Transverse colon (tissue), 4 donors: ENCODE measurements at regions of chr19 and their contacts with region 1.

Region 1: GRCh38 chr19:39335168-39335548 is 685 bp downstream of the GMFG start:
- DNase-seq: no peak
- H3K4me3 ChIP-seq: peak overlapping the region; percentile 15 to 52 (median 26)
- H3K27ac ChIP-seq: peak overlapping the region; percentile 74 to 83 (median 79)
- H3K4me1 ChIP-seq: peaks cover 0 to 4% (median 0%) of the 10 kb centered on the region in 4 donors
- H3K27me3 ChIP-seq: no peaks in the 10 kb centered on the region
- CTCF ChIP-seq: no peak
- EP300 ChIP-seq: no peak
- POLR2A ChIP-seq: no peak

Region 2: GRCh38 chr19:38964738-38965137 is 370.4 kb before region 1 on chr19:
- in situ Hi-C with region 1: no loop called
- intact Hi-C with region 1: loop called (anchors 5 kb)
- DNase-seq: no peak
- H3K4me3 ChIP-seq: no peak overlapping the region
- H3K27ac ChIP-seq: no peak overlapping the region
- H3K4me1 ChIP-seq: peaks cover 0 to 9% (median 3%) of the 10 kb centered on the region in 4 donors
- H3K27me3 ChIP-seq: no peaks in the 10 kb centered on the region
- CTCF ChIP-seq: no peak
- EP300 ChIP-seq: no peak
- POLR2A ChIP-seq: no peak